ENCODE measurements at regions of chr11 and their contacts with region 1.

Region 1: DNA sequence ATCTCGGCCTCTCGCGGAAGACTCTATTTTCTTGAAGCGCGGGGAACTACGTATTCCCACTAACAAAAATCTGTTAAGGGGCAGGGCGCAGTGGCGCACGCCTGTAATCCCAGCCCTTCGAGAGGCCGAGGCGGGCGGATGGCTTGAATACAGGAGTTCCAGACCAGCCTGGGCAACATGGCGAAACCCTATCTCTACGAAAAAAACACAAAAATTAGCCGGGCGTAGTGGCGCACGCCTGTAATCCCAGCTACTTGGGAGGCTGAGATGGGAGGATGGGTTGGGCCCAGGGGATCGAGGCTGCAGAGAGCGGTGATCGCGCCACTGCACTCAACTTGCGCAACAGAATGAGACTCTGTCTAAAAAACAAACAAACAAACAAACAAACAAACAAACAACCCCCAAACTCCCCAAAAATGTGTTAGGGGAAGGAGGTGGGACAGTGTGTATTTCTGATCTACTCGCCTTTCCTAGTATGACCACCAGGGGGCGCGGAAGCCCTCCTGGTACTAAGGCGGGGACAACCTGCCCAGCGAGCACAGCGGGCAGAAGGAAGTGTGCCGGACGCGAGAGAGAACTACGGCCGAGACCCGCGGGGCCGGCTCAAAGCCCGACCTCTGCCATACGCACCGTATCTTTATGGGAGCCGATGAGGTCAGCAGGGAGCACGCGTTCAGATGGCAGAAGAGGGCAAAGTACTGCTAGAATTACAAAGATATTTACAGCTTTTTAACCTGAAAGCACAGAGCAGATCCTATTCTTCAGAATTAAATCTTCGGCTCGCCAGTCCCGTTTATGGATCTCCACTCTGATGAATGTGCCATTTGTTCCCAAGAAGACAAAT is 1.3 kb upstream of the STX3 start:
- DNase-seq: peak; percentile 73
- H3K4me3 Mint-ChIP-seq: peak overlapping the region; percentile 92
- H3K27ac Mint-ChIP-seq: peak overlapping the region; percentile 50
- H3K4me1 Mint-ChIP-seq: peaks cover 15% of the 10 kb centered on the region
- H3K27me3 Mint-ChIP-seq: peaks cover 23% of the 10 kb centered on the region

Region 2: GRCh38 chr11:59292611-59293010 is 461.3 kb before region 1 on chr11:
- intact Hi-C with region 1: no loop called
- DNase-seq: no peak
- H3K4me3 Mint-ChIP-seq: no peak overlapping the region
- H3K27ac Mint-ChIP-seq: no peak overlapping the region
- H3K4me1 Mint-ChIP-seq: no peaks in the 10 kb centered on the region
- H3K27me3 Mint-ChIP-seq: peaks cover 6% of the 10 kb centered on the region

Region 3: DNA sequence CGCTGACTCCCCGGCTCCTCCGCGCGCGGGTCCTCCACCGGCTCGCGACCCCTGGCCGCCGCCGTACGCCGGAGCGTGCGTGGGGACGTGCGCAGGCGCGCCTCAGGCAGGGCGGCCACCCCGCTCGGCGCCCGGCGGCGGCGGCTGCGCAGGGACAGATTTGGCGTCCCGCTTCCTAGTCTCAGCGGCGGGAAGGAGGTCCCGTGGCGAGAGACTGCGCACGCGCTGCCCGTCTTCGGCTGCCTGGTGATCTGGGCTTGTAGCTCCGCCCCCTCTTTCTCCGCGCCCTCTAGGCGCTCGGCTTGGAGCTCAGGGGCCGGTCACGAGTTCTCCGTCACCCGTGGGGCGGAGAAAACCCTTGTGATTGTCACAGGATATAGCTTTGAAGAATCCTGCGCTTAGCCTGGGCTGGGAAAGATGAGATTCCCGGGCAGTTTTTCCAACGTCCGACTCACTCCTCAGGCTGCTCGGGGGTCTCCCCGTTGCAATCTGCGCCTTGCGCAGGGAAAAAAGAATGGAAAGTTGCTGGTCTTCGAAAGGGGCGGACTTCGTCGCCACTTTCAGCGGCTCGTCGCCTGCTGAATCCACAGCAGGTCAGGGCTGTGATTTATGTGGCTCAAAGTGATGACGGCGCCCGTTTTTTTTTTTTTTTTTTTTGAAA is 84.8 kb before region 1 on chr11 and contains the start of gene PATL1:
- intact Hi-C with region 1: loop called (anchors 1 kb)
- DNase-seq: peak; percentile 99
- H3K4me3 Mint-ChIP-seq: peak within 1 kb of the TSS; percentile 97
- H3K27ac Mint-ChIP-seq: peak within 1 kb of the TSS; percentile 98
- H3K4me1 Mint-ChIP-seq: peaks cover 36% of the 10 kb centered on the region
- H3K27me3 Mint-ChIP-seq: no peaks in the 10 kb centered on the region
- total RNA-seq, gene PATL1: 69.0 and 71.2 TPM in 2 replicates

Region 4: DNA sequence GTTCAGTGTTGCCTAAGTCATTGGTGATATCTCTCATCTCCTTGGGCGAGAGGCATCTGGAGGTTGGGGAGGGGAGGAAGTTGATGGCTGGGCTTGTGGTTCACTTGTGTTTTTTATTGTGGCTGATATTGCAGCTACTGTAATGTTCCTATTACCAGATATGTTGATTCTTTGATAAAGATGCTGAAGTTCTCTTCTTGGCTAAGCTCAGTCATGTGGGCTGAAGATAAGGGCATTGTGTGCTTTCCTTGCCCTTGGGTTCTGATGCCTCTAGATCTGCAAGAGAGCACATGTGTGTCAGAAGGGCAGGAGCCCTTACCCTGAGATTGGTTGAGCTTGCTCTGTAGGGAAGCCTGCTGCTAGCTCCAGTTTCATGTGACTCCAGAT is 13.3 kb after region 1 on chr11:
- intact Hi-C with region 1: loop called (anchors 1 kb)
- DNase-seq: peak; percentile 48
- H3K4me3 Mint-ChIP-seq: no peak overlapping the region
- H3K27ac Mint-ChIP-seq: peak overlapping the region; percentile 53
- H3K4me1 Mint-ChIP-seq: peaks cover 24% of the 10 kb centered on the region
- H3K27me3 Mint-ChIP-seq: peaks cover 14% of the 10 kb centered on the region

Region 5: DNA sequence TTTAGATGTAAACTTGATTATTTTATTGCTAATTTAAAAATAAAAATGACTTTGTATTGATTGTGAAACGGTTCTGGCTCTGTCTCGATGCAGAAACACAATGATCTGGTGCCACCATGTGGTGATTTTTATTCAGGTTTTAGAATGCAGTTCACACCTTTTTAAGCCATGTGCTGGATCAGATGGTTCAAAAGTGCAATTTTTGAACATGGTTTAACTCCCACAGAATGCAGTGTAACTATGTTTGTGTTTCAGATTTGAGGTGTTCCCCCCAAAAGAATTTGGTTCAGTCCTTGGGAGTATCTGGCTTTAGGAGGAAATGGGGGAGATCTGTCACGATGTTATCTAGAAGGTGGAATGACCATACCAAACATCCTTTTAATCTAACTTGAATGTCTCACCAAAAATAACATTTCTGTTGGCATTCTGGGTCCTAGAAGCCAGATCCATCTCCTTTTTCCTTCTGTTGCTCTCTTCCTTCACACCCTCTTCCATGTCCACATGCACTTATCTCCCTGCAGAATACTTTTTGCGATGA is 48.8 kb after region 1 on chr11:
- intact Hi-C with region 1: loop called (anchors 1 kb)
- DNase-seq: peak; percentile 20
- H3K4me3 Mint-ChIP-seq: no peak overlapping the region
- H3K27ac Mint-ChIP-seq: no peak overlapping the region
- H3K4me1 Mint-ChIP-seq: peaks cover 8% of the 10 kb centered on the region
- H3K27me3 Mint-ChIP-seq: no peaks in the 10 kb centered on the region

Region 6: DNA sequence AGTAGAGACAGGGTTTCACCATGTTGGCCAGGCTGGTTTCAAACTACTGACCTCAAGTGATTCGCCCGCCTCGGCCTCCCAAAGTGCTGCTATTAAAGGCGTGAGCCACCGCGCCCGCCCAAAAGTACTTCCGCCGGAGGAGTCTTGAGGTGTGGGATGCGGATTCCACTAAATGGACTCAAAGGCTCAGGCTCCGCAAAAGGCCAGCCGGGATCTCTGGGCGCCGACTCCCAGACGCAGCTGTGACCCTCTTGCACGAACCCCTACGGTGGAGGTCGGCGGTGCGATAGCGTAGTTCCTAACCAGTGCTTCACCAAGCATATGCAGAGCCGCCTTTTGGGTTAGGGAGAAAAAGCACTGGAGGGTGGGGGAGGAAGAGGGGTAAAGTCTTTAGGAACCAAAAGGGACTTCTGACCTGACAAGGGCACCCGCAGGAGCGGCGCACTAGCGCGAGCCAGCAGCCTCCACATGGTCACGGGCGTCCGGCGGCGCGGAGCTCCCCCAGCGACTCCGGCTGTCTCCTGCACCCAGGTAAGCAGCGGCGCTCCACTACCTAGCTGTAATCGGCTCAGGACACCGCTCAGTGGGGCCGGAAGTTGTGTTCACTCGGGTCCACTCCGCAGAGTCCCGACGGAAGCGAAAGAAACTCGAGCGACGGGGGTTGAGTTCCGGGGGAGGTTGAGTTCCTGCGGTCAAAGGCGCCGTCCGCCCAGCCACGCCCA is 56.5 kb after region 1 on chr11 and contains the start of gene MRPL16:
- intact Hi-C with region 1: loop called (anchors 2 kb)
- DNase-seq: peak; percentile 85
- H3K4me3 Mint-ChIP-seq: peak within 1 kb of the TSS; percentile 94
- H3K27ac Mint-ChIP-seq: peak within 1 kb of the TSS; percentile 84
- H3K4me1 Mint-ChIP-seq: peaks cover 22% of the 10 kb centered on the region
- H3K27me3 Mint-ChIP-seq: no peaks in the 10 kb centered on the region
- total RNA-seq, gene MRPL16: 87.7 and 90.4 TPM in 2 replicates

Region 7: GRCh38 chr11:59829358-59829757 is 75.5 kb after region 1 on chr11:
- intact Hi-C with region 1: no loop called
- DNase-seq: no peak
- H3K4me3 Mint-ChIP-seq: no peak overlapping the region
- H3K27ac Mint-ChIP-seq: no peak overlapping the region
- H3K4me1 Mint-ChIP-seq: peaks cover 8% of the 10 kb centered on the region
- H3K27me3 Mint-ChIP-seq: peaks cover 2% of the 10 kb centered on the region

Region 8: GRCh38 chr11:59918987-59919589 is 165.2 kb after region 1 on chr11:
- intact Hi-C with region 1: loop called (anchors 1 kb)
- DNase-seq: no peak
- H3K4me3 Mint-ChIP-seq: no peak overlapping the region
- H3K27ac Mint-ChIP-seq: no peak overlapping the region
- H3K4me1 Mint-ChIP-seq: peaks cover 2% of the 10 kb centered on the region
- H3K27me3 Mint-ChIP-seq: peaks cover 5% of the 10 kb centered on the region

Measured in activated T-helper 2 cell treated with anti-CD3 and anti-CD28 coated beads, Interferon-gamma antibody, Interleukin-2, Interleukin-4, amounts not matched to agents 10 μg/mL and 5 μg/mL and 100 μg/mL, durations not matched to agents 14 hours and 24 hours and 36 hours (primary cell).